Common myeloid progenitor, CD34-positive (primary cell): ENCODE measurements at regions of chr19 and their contacts with region 1.

Region 1: GRCh38 chr19:49451430-49452181 is at the start of gene PIH1D1:
- DNase-seq: peak; percentile 98 to 99 (median 99)
- H3K4me3 ChIP-seq: peak within 1 kb of the TSS; percentile 71 to 100 (median 89)
- H3K27ac ChIP-seq: peak within 1 kb of the TSS; percentile 96 to 99
- H3K4me1 ChIP-seq: peaks cover 0 to 29% (median 22%) of the 10 kb centered on the region in 4 experiments
- H3K27me3 ChIP-seq: no peaks in the 10 kb centered on the region

Region 2: GRCh38 chr19:49441210-49441959 is 10.2 kb before region 1 on chr19 and contains the start of gene SLC17A7:
- CTCF ChIA-PET with region 1: no interaction called
- POLR2A ChIA-PET with region 1: no interaction called
- DNase-seq: peak in 2 of 3 donors; percentile 47 to 50
- H3K4me3 ChIP-seq: peak within 1 kb of the TSS in 4 of 7 experiments; percentile 3 to 79 (median 49)
- H3K27ac ChIP-seq: no peak within 1 kb of the TSS
- H3K4me1 ChIP-seq: peaks cover 0 to 26% (median 16%) of the 10 kb centered on the region in 4 experiments
- H3K27me3 ChIP-seq: peaks cover 2 to 62% (median 41%) of the 10 kb centered on the region in 5 experiments

Region 3: GRCh38 chr19:49473868-49474544 is 22.4 kb after region 1 on chr19 and contains the start of gene FLT3LG:
- CTCF ChIA-PET with region 1: interaction called, 23 read pairs
- POLR2A ChIA-PET with region 1: interaction called, 9 read pairs
- DNase-seq: peak; percentile 88 to 93 (median 92)
- H3K4me3 ChIP-seq: peak within 1 kb of the TSS; percentile 51 to 81 (median 65)
- H3K27ac ChIP-seq: peak within 1 kb of the TSS in 1 of 2 experiments; percentile 79
- H3K4me1 ChIP-seq: peaks cover 4 to 56% (median 51%) of the 10 kb centered on the region in 4 experiments
- H3K27me3 ChIP-seq: no peaks in the 10 kb centered on the region